B cell (primary cell): ENCODE measurements at regions of chr12 and their contacts with region 1.

Region 1: GRCh38 chr12:57124259-57124877 is 3.9 kb upstream of the LRP1 start:
- DNase-seq: peak; percentile 84
- ATAC-seq: peak; percentile 67
- H3K4me3 ChIP-seq: no peak overlapping the region
- H3K4me3 Mint-ChIP-seq: peak overlapping the region; percentile 9
- H3K27ac ChIP-seq: no peak overlapping the region
- H3K27ac Mint-ChIP-seq: no peak overlapping the region
- H3K4me1 ChIP-seq: peaks cover 13 to 21% of the 10 kb centered on the region in 2 donors
- H3K4me1 Mint-ChIP-seq: peaks cover 7% of the 10 kb centered on the region
- H3K27me3 ChIP-seq: peaks cover 0 to 9% (median 1%) of the 10 kb centered on the region in 4 experiments
- H3K27me3 Mint-ChIP-seq: peaks cover 3% of the 10 kb centered on the region
- CTCF ChIP-seq: peak; percentile 96

Region 2: GRCh38 chr12:56724972-56725722 is 399.2 kb before region 1 on chr12 and contains the start of gene NACA:
- CTCF ChIA-PET with region 1: no interaction called
- POLR2A ChIA-PET with region 1: no interaction called
- intact Hi-C with region 1: no loop called
- DNase-seq: peak; percentile 98
- ATAC-seq: peak; percentile 95
- H3K4me3 ChIP-seq: peak within 1 kb of the TSS; percentile 76 to 99 (median 90)
- H3K4me3 Mint-ChIP-seq: peak within 1 kb of the TSS; percentile 95
- H3K27ac ChIP-seq: peak within 1 kb of the TSS; percentile 81 to 92
- H3K27ac Mint-ChIP-seq: peak within 1 kb of the TSS; percentile 95
- H3K4me1 ChIP-seq: peaks cover 47 to 49% of the 10 kb centered on the region in 2 donors
- H3K4me1 Mint-ChIP-seq: peaks cover 59% of the 10 kb centered on the region
- H3K27me3 ChIP-seq: no peaks in the 10 kb centered on the region
- H3K27me3 Mint-ChIP-seq: no peaks in the 10 kb centered on the region
- CTCF ChIP-seq: no peak
- total RNA-seq, gene NACA: 993 and 1,076 TPM in 2 replicates

Region 3: GRCh38 chr12:57069523-57069922 is 54.8 kb before region 1 on chr12:
- CTCF ChIA-PET with region 1: interaction called, 61 read pairs
- POLR2A ChIA-PET with region 1: interaction called, 4 read pairs
- intact Hi-C with region 1: no loop called
- DNase-seq: peak; percentile 85
- ATAC-seq: peak; percentile 100
- H3K4me3 ChIP-seq: no peak overlapping the region
- H3K4me3 Mint-ChIP-seq: no peak overlapping the region
- H3K27ac ChIP-seq: peak overlapping the region; percentile 30 to 53
- H3K27ac Mint-ChIP-seq: peak overlapping the region; percentile 82
- H3K4me1 ChIP-seq: peaks cover 12 to 23% of the 10 kb centered on the region in 2 donors
- H3K4me1 Mint-ChIP-seq: peaks cover 32% of the 10 kb centered on the region
- H3K27me3 ChIP-seq: no peaks in the 10 kb centered on the region
- H3K27me3 Mint-ChIP-seq: no peaks in the 10 kb centered on the region
- CTCF ChIP-seq: peak; percentile 85

Region 4: DNA sequence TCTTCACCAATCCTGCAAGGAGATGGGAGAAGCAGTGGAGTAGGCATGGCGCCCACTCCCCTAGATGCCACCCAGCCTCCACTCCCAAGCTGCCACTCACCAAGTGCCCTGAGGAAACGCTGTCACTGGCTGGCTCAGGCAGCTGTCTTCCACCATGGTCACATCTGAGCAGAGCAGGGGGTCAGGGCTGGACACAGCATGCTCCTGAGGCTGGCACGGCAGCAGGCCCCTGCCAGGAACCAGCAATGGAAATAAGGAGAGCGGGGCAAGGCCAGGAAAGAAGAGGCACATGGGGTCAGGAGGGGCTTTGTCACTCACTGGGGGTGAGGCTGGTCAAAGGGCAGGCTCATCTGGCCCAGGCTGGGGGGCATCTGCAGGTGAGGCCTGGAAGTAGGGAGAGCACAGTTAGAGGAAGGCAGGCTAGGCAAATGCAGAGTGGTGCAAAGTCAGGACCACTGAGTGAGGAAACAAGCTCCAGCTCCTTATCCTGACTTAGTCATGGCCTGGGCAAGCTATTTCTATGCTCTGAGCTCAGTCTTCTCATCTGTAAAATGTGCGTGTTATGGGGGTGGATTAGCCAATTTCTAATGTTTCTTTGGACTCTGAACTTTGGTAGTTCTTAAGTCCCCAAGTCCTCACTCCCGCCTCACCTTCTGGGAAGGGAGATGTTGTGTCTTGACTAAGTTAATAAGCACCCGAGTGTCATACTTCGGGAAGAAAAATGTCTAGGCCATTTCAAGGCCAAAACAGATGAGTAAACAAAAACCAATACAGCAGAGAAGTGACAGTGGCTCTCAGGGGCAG is 27.4 kb before region 1 on chr12:
- CTCF ChIA-PET with region 1: interaction called, 10 read pairs
- POLR2A ChIA-PET with region 1: no interaction called
- intact Hi-C with region 1: no loop called
- DNase-seq: no peak
- ATAC-seq: no peak
- H3K4me3 ChIP-seq: no peak overlapping the region
- H3K4me3 Mint-ChIP-seq: no peak overlapping the region
- H3K27ac ChIP-seq: peak overlapping the region in 1 of 2 donors; percentile 7
- H3K27ac Mint-ChIP-seq: peak overlapping the region; percentile 59
- H3K4me1 ChIP-seq: peaks cover 19 to 23% of the 10 kb centered on the region in 2 donors
- H3K4me1 Mint-ChIP-seq: peaks cover 48% of the 10 kb centered on the region
- H3K27me3 ChIP-seq: no peaks in the 10 kb centered on the region
- H3K27me3 Mint-ChIP-seq: no peaks in the 10 kb centered on the region
- CTCF ChIP-seq: no peak

Region 5: GRCh38 chr12:57182921-57183790 is 58.8 kb after region 1 on chr12:
- CTCF ChIA-PET with region 1: interaction called, 108 read pairs
- POLR2A ChIA-PET with region 1: interaction called, 4 read pairs
- intact Hi-C with region 1: loop called (anchors 1 kb)
- DNase-seq: peak; percentile 86
- ATAC-seq: peak; percentile 99
- H3K4me3 ChIP-seq: no peak overlapping the region
- H3K4me3 Mint-ChIP-seq: no peak overlapping the region
- H3K27ac ChIP-seq: no peak overlapping the region
- H3K27ac Mint-ChIP-seq: peak overlapping the region; percentile 1
- H3K4me1 ChIP-seq: peaks cover 0 to 6% of the 10 kb centered on the region in 2 donors
- H3K4me1 Mint-ChIP-seq: peaks cover 5% of the 10 kb centered on the region
- H3K27me3 ChIP-seq: no peaks in the 10 kb centered on the region
- H3K27me3 Mint-ChIP-seq: peaks cover 2% of the 10 kb centered on the region
- CTCF ChIP-seq: peak; percentile 88

Region 6: GRCh38 chr12:57238854-57239554 is 114.6 kb after region 1 on chr12:
- CTCF ChIA-PET with region 1: interaction called, 60 read pairs
- POLR2A ChIA-PET with region 1: interaction called, 3 read pairs
- intact Hi-C with region 1: loop called (anchors 1 kb)
- DNase-seq: peak; percentile 93
- ATAC-seq: peak; percentile 46
- H3K4me3 ChIP-seq: peak overlapping the region; percentile 19 to 79 (median 75)
- H3K4me3 Mint-ChIP-seq: peak overlapping the region; percentile 89
- H3K27ac ChIP-seq: no peak overlapping the region
- H3K27ac Mint-ChIP-seq: peak overlapping the region; percentile 92
- H3K4me1 ChIP-seq: peaks cover 92 to 99% of the 10 kb centered on the region in 2 donors
- H3K4me1 Mint-ChIP-seq: peaks cover 92% of the 10 kb centered on the region
- H3K27me3 ChIP-seq: peaks cover 0 to 70% (median 30%) of the 10 kb centered on the region in 4 experiments
- H3K27me3 Mint-ChIP-seq: peaks cover 12% of the 10 kb centered on the region
- CTCF ChIP-seq: peak; percentile 100

Region 7: DNA sequence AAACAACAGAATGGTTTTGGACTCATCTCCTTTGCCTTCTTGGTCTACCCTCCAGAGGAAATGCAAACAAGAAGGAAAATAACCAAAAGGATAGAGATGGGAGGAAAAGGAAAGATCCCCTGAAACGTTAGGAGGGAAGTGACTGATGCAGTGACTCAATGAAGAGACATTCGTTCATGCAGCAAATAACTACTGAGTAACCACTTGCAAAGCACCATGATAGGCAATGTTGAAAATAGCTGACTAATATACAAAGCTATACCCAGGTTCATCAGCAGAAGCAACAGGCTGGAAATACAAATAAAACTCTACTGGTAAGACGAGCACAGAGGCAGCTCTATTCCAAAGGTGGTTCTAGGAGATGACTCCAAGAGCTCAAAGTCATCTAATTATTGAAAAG is 264.7 kb after region 1 on chr12:
- CTCF ChIA-PET with region 1: no interaction called
- POLR2A ChIA-PET with region 1: no interaction called
- intact Hi-C with region 1: no loop called
- DNase-seq: no peak
- ATAC-seq: no peak
- H3K4me3 ChIP-seq: no peak overlapping the region
- H3K4me3 Mint-ChIP-seq: no peak overlapping the region
- H3K27ac ChIP-seq: no peak overlapping the region
- H3K27ac Mint-ChIP-seq: no peak overlapping the region
- H3K4me1 ChIP-seq: no peaks in the 10 kb centered on the region
- H3K4me1 Mint-ChIP-seq: no peaks in the 10 kb centered on the region
- H3K27me3 ChIP-seq: no peaks in the 10 kb centered on the region
- H3K27me3 Mint-ChIP-seq: no peaks in the 10 kb centered on the region
- CTCF ChIP-seq: no peak